ENCODE measurements at regions of chr9 and their contacts with region 1.

Region 1: GRCh38 chr9:112717661-112718341 is at the start of gene INIP:
- DNase-seq: peak; percentile 99
- ATAC-seq: peak; percentile 92
- H3K4me3 Mint-ChIP-seq: peak within 1 kb of the TSS; percentile 91
- H3K27ac Mint-ChIP-seq: peak within 1 kb of the TSS; percentile 96
- H3K4me1 Mint-ChIP-seq: peaks cover 32% of the 10 kb centered on the region
- H3K27me3 Mint-ChIP-seq: no peaks in the 10 kb centered on the region
- CTCF ChIP-seq: peak; percentile 14
- total RNA-seq, gene INIP: 28.9 to 31.0 TPM

Region 2: GRCh38 chr9:112694706-112695555 is 22.9 kb before region 1 on chr9:
- CTCF ChIA-PET with region 1: no interaction called
- POLR2A ChIA-PET with region 1: no interaction called
- intact Hi-C with region 1: no loop called
- DNase-seq: no peak
- ATAC-seq: no peak
- H3K4me3 Mint-ChIP-seq: no peak overlapping the region
- H3K27ac Mint-ChIP-seq: no peak overlapping the region
- H3K4me1 Mint-ChIP-seq: peaks cover 22% of the 10 kb centered on the region
- H3K27me3 Mint-ChIP-seq: no peaks in the 10 kb centered on the region
- CTCF ChIP-seq: no peak

Region 3: DNA sequence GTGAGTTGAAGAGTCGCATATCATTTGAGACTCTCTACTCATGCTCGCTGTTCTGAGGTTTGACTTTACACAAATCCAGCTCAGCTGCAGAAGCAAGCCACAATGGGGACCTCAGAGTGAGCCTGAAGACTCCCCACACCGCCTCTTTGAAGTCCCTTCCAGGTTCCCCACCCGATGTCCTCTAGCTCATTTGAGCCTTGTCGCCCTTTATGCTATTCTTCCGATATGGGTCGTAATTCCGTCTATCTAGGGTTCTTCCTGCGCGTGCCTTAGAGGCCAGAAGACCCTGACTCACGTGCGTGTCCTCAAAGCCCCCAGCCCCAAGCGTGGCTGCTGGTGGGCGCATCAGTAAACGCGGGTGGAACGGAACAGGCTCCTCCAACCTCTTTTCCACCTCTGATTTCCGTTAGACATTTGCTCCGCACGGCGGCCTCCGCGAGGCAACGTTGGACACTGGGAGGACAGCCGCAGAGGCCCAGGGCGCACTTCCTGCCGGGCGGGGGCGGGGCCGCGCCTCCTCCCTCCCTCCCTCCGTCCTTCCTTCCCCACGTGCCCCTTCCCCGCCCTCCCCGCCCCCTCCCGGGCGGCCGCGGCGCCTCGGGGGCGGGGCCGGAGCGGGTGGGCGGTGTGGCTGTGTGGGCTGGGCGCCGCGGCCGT is 32.4 kb after region 1 on chr9 and contains the start of gene SNX30:
- CTCF ChIA-PET with region 1: no interaction called
- POLR2A ChIA-PET with region 1: interaction called, 3 read pairs
- intact Hi-C with region 1: loop called (anchors 5 kb)
- DNase-seq: peak; percentile 75
- ATAC-seq: peak; percentile 48
- H3K4me3 Mint-ChIP-seq: peak within 1 kb of the TSS; percentile 78
- H3K27ac Mint-ChIP-seq: peak within 1 kb of the TSS; percentile 79
- H3K4me1 Mint-ChIP-seq: peaks cover 66% of the 10 kb centered on the region
- H3K27me3 Mint-ChIP-seq: no peaks in the 10 kb centered on the region
- CTCF ChIP-seq: no peak
- total RNA-seq, gene SNX30: 3.8 to 3.9 TPM